Endothelial cell of umbilical vein (primary cell): ENCODE measurements at regions of chrX and their contacts with region 1.

Region 1: DNA sequence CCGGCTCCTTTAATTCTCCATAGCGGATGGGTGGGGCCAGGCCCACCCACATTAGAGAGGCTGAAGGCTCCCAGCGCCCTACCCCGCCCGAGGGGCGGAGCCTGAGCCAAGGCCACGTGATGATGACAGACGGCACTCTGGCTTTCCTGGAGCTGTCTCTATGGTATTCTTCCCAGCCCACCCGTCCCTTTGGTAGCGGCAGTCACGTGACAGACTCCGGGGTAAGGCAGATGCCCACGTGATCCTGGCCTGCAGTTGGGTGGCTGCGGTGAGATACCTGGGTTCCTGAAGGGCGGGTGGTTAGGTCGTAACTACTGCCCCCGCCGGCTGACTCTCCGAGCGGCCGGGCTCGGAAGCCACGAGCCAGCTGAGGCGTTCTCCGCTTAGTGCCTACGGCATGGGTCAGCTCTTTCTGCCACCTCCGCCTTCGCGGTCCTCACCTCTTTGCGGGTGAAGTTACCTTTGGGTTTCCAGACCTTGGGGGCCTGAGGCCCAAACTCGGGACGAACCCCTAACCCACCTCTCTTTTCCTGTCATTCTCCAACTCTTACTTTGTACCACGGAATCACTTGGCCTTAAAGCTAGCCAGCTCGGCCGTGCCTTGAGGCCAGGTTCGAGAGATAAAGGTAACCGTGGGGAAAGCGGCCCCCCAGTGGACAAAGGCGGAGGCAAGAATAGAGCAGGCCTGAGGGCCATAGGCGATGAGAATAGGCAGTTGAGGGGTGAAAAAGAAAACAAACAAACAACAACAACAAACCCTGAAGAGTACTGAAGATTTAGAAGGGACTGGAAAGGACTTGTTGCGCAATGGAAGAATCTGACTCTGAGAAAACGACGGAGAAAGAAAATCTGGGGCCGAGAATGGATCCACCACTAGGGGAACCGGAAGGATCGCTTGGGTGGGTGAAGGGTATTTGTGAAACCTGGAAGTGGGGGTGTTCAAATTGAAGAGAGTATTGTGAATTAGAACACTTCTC is at the start of gene RRAGB:
- DNase-seq: peak; percentile 93
- H3K4me3 ChIP-seq: peak within 1 kb of the TSS; percentile 82 to 89 (median 89)
- H3K27ac ChIP-seq: peak within 1 kb of the TSS; percentile 95
- H3K4me1 ChIP-seq: peaks cover 28% of the 10 kb centered on the region
- H3K27me3 ChIP-seq: no peaks in the 10 kb centered on the region
- CTCF ChIP-seq: peak; percentile 53 to 58
- POLR2A ChIP-seq: peak; percentile 30
- total RNA-seq, gene RRAGB: 12.3 and 14.3 TPM in 2 replicates

Region 2: GRCh38 chrX:55488593-55489313 is 229.1 kb before region 1 on chrX:
- CTCF ChIA-PET with region 1: interaction called, 32 read pairs
- POLR2A ChIA-PET with region 1: interaction called, 3 read pairs
- dilution Hi-C with region 1: no loop called
- intact Hi-C with region 1: no loop called
- DNase-seq: peak; percentile 73
- H3K4me3 ChIP-seq: peak overlapping the region; percentile 22 to 70 (median 61)
- H3K27ac ChIP-seq: peak overlapping the region; percentile 54
- H3K4me1 ChIP-seq: peaks cover 2% of the 10 kb centered on the region
- H3K27me3 ChIP-seq: no peaks in the 10 kb centered on the region
- CTCF ChIP-seq: no peak
- POLR2A ChIP-seq: no peak

Region 3: DNA sequence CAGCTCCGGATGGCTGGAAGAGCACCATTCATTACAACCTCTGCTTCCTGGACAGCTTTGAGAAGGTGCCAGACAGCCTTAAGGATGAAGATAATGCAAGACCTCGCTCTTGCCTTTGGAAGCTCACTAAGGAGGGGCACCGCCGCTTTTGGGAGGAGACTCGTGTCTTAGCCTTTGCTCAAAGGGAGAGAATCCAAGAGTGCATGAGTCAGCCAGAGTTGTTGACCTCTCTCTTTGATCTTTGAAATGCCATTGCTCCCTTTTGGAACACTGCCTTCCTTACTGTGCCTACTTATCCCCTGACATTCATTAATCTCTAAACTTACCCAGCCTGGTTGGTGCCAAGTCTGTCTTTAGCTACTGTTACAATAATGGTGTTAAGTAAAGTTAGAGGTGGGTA is 93.4 kb before region 1 on chrX:
- CTCF ChIA-PET with region 1: no interaction called
- POLR2A ChIA-PET with region 1: no interaction called
- dilution Hi-C with region 1: no loop called
- intact Hi-C with region 1: loop called (anchors 10 kb)
- DNase-seq: no peak
- H3K4me3 ChIP-seq: no peak overlapping the region
- H3K27ac ChIP-seq: no peak overlapping the region
- H3K4me1 ChIP-seq: no peaks in the 10 kb centered on the region
- H3K27me3 ChIP-seq: no peaks in the 10 kb centered on the region
- CTCF ChIP-seq: no peak
- POLR2A ChIP-seq: no peak

Region 4: DNA sequence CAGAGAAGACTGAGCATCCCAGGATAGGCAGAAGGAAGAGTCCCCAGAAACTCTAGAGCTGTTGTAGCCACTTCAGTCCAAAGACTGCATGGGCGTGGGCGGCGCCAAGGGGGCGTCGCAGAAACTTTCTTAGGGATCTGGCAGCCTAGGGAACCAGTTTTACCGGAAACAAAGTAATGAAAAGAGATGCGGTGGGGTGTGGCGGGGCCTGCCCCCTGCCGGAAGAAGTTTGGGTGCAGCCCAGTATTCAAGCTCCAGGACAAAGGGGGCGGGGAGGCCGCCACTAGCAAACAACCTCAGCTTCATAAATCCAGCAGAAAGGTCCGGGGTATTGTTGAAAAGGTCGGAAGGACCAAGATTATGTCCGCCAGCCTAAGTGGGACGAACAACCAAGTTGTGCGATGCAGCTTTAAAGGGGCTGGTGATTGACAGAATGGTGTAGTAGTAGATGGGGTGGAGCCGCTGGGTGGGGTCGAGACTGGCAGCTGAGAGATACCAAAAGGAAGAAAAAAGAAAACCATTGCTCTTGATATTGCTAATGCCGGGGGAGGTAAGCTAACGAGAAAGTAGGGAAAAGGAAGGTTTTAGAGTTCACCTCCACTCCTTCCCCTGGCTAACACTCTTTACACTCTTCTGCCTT is 190.3 kb after region 1 on chrX:
- CTCF ChIA-PET with region 1: interaction called, 7 read pairs
- POLR2A ChIA-PET with region 1: no interaction called
- dilution Hi-C with region 1: no loop called
- intact Hi-C with region 1: loop called (anchors 1 kb)
- DNase-seq: peak; percentile 6
- H3K4me3 ChIP-seq: peak overlapping the region; percentile 70 to 90 (median 86)
- H3K27ac ChIP-seq: peak overlapping the region; percentile 17
- H3K4me1 ChIP-seq: no peaks in the 10 kb centered on the region
- H3K27me3 ChIP-seq: no peaks in the 10 kb centered on the region
- CTCF ChIP-seq: peak; percentile 23 to 27
- POLR2A ChIP-seq: no peak

Region 5: GRCh38 chrX:56248492-56248891 is 530.7 kb after region 1 on chrX:
- CTCF ChIA-PET with region 1: interaction called, 6 read pairs
- POLR2A ChIA-PET with region 1: no interaction called
- dilution Hi-C with region 1: no loop called
- intact Hi-C with region 1: loop called (anchors 5 kb)
- DNase-seq: peak; percentile 47
- H3K4me3 ChIP-seq: no peak overlapping the region
- H3K27ac ChIP-seq: no peak overlapping the region
- H3K4me1 ChIP-seq: no peaks in the 10 kb centered on the region
- H3K27me3 ChIP-seq: no peaks in the 10 kb centered on the region
- CTCF ChIP-seq: peak; percentile 49 to 51
- POLR2A ChIP-seq: no peak